ENCODE measurements at regions of chrX and their contacts with region 1.

Region 1: GRCh38 chrX:11724122-11725017 is 33.7 kb upstream of the MSL3 start:
- DNase-seq: no peak
- H3K4me3 ChIP-seq: no peak overlapping the region
- CTCF ChIP-seq: peak; percentile 42

Region 2: DNA sequence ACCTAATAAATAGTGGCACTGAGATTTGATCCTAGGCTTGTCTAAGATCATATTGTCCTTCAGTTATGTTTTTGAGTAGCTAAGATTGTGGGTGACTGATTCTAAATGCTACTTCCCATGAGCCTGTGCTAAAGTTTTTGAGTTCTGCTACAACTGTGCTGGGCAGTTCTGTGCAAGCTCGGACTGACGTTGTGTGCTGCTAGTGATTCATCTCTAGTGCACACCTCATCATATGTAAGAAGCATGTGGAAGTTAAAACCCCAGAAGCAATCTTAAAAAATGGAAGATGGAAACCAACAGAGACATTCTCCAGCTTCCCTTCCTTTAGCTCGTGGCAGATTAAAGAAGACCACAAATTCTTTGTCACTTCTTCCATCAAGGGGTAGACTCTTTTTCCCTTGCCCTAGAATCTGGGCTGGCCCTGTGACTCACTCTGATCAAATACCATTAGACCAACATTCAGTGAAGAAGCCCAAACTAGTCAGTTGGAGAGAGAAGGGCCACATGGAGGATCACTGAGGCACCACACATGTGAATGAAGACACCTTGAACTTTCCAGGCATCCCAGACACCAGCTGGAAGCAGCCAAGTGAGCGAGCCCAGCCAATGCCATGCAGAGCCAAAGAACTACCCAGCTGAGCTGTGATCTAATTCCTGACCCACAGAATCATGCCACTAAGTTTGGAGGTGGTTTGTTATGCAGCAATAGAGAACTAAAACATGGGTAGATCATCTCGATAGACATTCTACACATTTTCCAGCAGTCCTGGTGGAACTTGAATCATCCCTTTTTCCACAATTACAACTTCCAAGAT is 75.5 kb before region 1 on chrX:
- CTCF ChIA-PET with region 1: no interaction called
- POLR2A ChIA-PET with region 1: no interaction called
- DNase-seq: no peak
- H3K4me3 ChIP-seq: no peak overlapping the region
- CTCF ChIP-seq: no peak

Region 3: GRCh38 chrX:11739776-11740175 is 15.4 kb after region 1 on chrX:
- CTCF ChIA-PET with region 1: interaction called, 10 read pairs
- POLR2A ChIA-PET with region 1: no interaction called
- DNase-seq: no peak
- H3K4me3 ChIP-seq: no peak overlapping the region
- CTCF ChIP-seq: no peak